WTC11 (cell line): ENCODE measurements at regions of chr3 and their contacts with region 1.

Region 1: GRCh38 chr3:176939022-176939817 is 258.1 kb downstream of the TBL1XR1 start:
- DNase-seq: peak; percentile 25
- ATAC-seq: peak; percentile 86
- H3K4me3 Mint-ChIP-seq: no peak overlapping the region
- H3K27ac Mint-ChIP-seq: no peak overlapping the region
- H3K4me1 Mint-ChIP-seq: peaks cover 12% of the 10 kb centered on the region; the same call in 1 of the 2 replicates
- H3K27me3 Mint-ChIP-seq: no peaks in the 10 kb centered on the region
- CTCF ChIP-seq: peak; percentile 67

Region 2: GRCh38 chr3:176514297-176514696 is 424.9 kb before region 1 on chr3:
- CTCF ChIA-PET with region 1: interaction called, 20 read pairs
- POLR2A ChIA-PET with region 1: no interaction called
- DNase-seq: peak; percentile 75
- ATAC-seq: peak; percentile 97
- H3K4me3 Mint-ChIP-seq: no peak overlapping the region
- H3K27ac Mint-ChIP-seq: peak overlapping the region; percentile 87; the same call in 1 of the 2 replicates
- H3K4me1 Mint-ChIP-seq: peaks cover 13% of the 10 kb centered on the region
- H3K27me3 Mint-ChIP-seq: peaks cover 11% of the 10 kb centered on the region
- CTCF ChIP-seq: peak; percentile 92

Region 3: GRCh38 chr3:176814285-176814684 is 124.9 kb before region 1 on chr3:
- CTCF ChIA-PET with region 1: interaction called, 13 read pairs
- POLR2A ChIA-PET with region 1: no interaction called
- DNase-seq: peak; percentile 87
- ATAC-seq: peak; percentile 100
- H3K4me3 Mint-ChIP-seq: no peak overlapping the region
- H3K27ac Mint-ChIP-seq: no peak overlapping the region
- H3K4me1 Mint-ChIP-seq: peaks cover 7% of the 10 kb centered on the region
- H3K27me3 Mint-ChIP-seq: no peaks in the 10 kb centered on the region
- CTCF ChIP-seq: peak; percentile 54

Region 4: GRCh38 chr3:176872771-176873209 is 66.4 kb before region 1 on chr3:
- CTCF ChIA-PET with region 1: interaction called, 26 read pairs
- POLR2A ChIA-PET with region 1: no interaction called
- DNase-seq: peak; percentile 69
- ATAC-seq: peak; percentile 96
- H3K4me3 Mint-ChIP-seq: no peak overlapping the region
- H3K27ac Mint-ChIP-seq: no peak overlapping the region
- H3K4me1 Mint-ChIP-seq: peaks cover 5% of the 10 kb centered on the region
- H3K27me3 Mint-ChIP-seq: no peaks in the 10 kb centered on the region
- CTCF ChIP-seq: peak; percentile 56; the same call in 1 of the 2 replicates